B cell (primary cell): ENCODE measurements at regions of chr14 and their contacts with region 1.

Region 1: GRCh38 chr14:32202998-32203882 is at the start of gene RNU6-8:
- DNase-seq: peak; percentile 94
- ATAC-seq: peak; percentile 77
- H3K4me3 ChIP-seq: peak within 1 kb of the TSS; percentile 67 to 88 (median 87)
- H3K4me3 Mint-ChIP-seq: peak within 1 kb of the TSS; percentile 92
- H3K27ac ChIP-seq: peak within 1 kb of the TSS; percentile 99
- H3K27ac Mint-ChIP-seq: peak within 1 kb of the TSS; percentile 99
- H3K4me1 ChIP-seq: peaks cover 13 to 27% of the 10 kb centered on the region in 2 donors
- H3K4me1 Mint-ChIP-seq: peaks cover 48% of the 10 kb centered on the region
- H3K27me3 ChIP-seq: no peaks in the 10 kb centered on the region
- H3K27me3 Mint-ChIP-seq: no peaks in the 10 kb centered on the region
- CTCF ChIP-seq: no peak
- total RNA-seq, gene RNU6-8: not detected in 2 replicates

Region 2: DNA sequence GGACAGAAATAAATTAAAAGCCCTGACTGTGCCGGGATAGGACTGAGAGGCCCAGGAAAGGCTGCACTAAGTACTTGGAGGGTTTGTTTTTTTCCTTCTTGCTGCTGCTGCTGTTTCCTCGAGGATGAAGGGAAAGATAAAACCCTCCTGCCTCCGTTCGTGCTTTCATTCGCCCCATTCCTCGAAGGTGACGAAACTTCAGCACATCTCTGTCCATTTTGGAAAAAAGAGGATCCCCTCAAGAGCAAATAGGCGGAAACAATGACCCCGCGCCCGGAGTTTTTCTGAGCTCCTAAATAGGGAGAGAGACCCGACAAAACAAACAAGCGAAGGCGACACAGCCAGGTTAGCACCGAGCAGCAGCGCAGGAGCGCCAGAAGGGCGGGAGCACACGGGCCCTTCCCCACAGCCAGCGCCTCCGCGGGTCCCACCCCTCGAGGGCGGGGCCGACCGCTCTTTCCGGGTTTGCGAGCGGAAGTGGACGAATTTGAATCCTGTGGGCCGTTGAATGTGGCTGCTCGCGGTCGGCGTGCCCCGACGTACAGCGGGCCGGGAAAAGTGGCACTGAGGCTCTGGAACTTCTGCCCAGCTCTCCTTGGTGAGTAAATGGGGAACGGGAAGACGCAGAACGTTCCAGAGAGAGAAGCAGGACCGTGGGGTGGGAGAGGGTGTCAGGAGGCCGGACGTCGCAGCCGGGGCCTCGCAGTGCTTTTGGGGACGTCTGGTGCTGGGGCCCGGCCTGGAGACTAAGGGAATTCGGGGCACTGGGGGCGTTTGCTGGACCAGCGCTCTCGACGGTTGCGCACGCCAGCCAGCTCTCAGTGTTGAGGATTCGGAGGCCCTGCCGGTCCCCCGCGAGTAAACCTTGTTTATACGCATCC is 1644.3 kb before region 1 on chr14 and contains the start of gene G2E3:
- CTCF ChIA-PET with region 1: no interaction called
- POLR2A ChIA-PET with region 1: no interaction called
- intact Hi-C with region 1: loop called (anchors 2 kb)
- DNase-seq: peak; percentile 90
- ATAC-seq: peak; percentile 99
- H3K4me3 ChIP-seq: peak within 1 kb of the TSS; percentile 87 to 99 (median 95)
- H3K4me3 Mint-ChIP-seq: peak within 1 kb of the TSS; percentile 100
- H3K27ac ChIP-seq: peak within 1 kb of the TSS; percentile 77 to 89
- H3K27ac Mint-ChIP-seq: peak within 1 kb of the TSS; percentile 98
- H3K4me1 ChIP-seq: peaks cover 15 to 17% of the 10 kb centered on the region in 2 donors
- H3K4me1 Mint-ChIP-seq: peaks cover 32% of the 10 kb centered on the region
- H3K27me3 ChIP-seq: no peaks in the 10 kb centered on the region
- H3K27me3 Mint-ChIP-seq: no peaks in the 10 kb centered on the region
- CTCF ChIP-seq: no peak
- total RNA-seq, gene G2E3: 29.2 and 35.4 TPM in 2 replicates

Region 3: GRCh38 chr14:31207755-31208545 is 995.3 kb before region 1 on chr14 and contains the start of gene HECTD1:
- CTCF ChIA-PET with region 1: interaction called, 3 read pairs
- POLR2A ChIA-PET with region 1: no interaction called
- intact Hi-C with region 1: loop called (anchors 5 kb)
- DNase-seq: peak; percentile 95
- ATAC-seq: peak; percentile 83
- H3K4me3 ChIP-seq: peak within 1 kb of the TSS; percentile 75 to 90 (median 83)
- H3K4me3 Mint-ChIP-seq: peak within 1 kb of the TSS; percentile 99
- H3K27ac ChIP-seq: peak within 1 kb of the TSS; percentile 94 to 97
- H3K27ac Mint-ChIP-seq: peak within 1 kb of the TSS; percentile 99
- H3K4me1 ChIP-seq: peaks cover 21 to 27% of the 10 kb centered on the region in 2 donors
- H3K4me1 Mint-ChIP-seq: peaks cover 37% of the 10 kb centered on the region
- H3K27me3 ChIP-seq: no peaks in the 10 kb centered on the region
- H3K27me3 Mint-ChIP-seq: no peaks in the 10 kb centered on the region
- CTCF ChIP-seq: peak; percentile 97
- total RNA-seq, gene HECTD1: 184 and 199 TPM in 2 replicates

Region 4: DNA sequence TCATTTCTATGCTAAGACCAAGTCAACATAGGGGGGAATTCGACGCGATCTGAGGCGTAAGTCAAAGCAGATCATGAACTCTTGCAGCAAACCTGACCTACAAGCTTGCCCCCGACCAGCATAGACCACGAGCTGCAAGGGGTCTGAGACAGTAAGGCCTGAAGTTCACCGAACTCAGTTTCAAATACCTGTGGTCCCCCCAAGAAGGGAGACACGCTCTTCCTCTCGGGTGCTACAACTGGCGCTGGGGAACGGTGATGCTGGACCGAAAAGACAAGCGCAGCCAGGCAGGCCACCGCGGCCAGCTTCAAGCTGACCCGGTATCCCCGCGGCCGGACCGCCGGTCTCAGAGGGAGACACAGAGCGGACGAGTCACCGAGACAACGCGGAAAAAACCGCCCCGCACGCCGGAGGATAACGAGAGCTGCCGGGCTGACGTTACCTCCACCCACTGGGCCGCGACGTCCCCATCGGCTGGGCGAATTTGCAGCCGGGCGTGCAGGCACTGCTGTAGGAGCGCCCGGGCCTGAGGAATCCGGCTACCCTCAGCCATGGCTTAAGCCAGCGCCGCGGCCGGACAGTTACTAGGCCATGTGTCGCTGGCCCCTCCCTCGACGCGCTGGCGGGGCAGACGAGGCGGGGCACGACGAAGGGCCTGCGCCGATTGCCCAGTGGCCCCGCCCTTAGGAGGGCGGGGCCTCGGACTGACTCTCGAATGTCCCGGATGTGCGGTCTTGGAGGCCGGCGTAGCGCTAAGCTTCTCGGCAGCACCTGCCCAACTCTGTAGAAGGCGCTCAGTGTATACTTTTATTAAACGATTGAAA is 746.2 kb before region 1 on chr14 and contains the start of gene DTD2:
- CTCF ChIA-PET with region 1: no interaction called
- POLR2A ChIA-PET with region 1: no interaction called
- intact Hi-C with region 1: loop called (anchors 2 kb)
- DNase-seq: peak; percentile 95
- ATAC-seq: peak; percentile 99
- H3K4me3 ChIP-seq: peak within 1 kb of the TSS; percentile 63 to 87 (median 71)
- H3K4me3 Mint-ChIP-seq: peak within 1 kb of the TSS; percentile 98
- H3K27ac ChIP-seq: peak within 1 kb of the TSS; percentile 72 to 82
- H3K27ac Mint-ChIP-seq: peak within 1 kb of the TSS; percentile 93
- H3K4me1 ChIP-seq: peaks cover 8 to 13% of the 10 kb centered on the region in 2 donors
- H3K4me1 Mint-ChIP-seq: peaks cover 32% of the 10 kb centered on the region
- H3K27me3 ChIP-seq: no peaks in the 10 kb centered on the region
- H3K27me3 Mint-ChIP-seq: no peaks in the 10 kb centered on the region
- CTCF ChIP-seq: no peak
- total RNA-seq, gene DTD2: 12.5 and 14.1 TPM in 2 replicates

Region 5: GRCh38 chr14:32150392-32150791 is 52.8 kb before region 1 on chr14:
- CTCF ChIA-PET with region 1: no interaction called
- POLR2A ChIA-PET with region 1: no interaction called
- intact Hi-C with region 1: loop called (anchors 10 kb)
- DNase-seq: no peak
- ATAC-seq: no peak
- H3K4me3 ChIP-seq: no peak overlapping the region
- H3K4me3 Mint-ChIP-seq: no peak overlapping the region
- H3K27ac ChIP-seq: no peak overlapping the region
- H3K27ac Mint-ChIP-seq: no peak overlapping the region
- H3K4me1 ChIP-seq: no peaks in the 10 kb centered on the region
- H3K4me1 Mint-ChIP-seq: no peaks in the 10 kb centered on the region
- H3K27me3 ChIP-seq: no peaks in the 10 kb centered on the region
- H3K27me3 Mint-ChIP-seq: no peaks in the 10 kb centered on the region
- CTCF ChIP-seq: no peak

Region 6: DNA sequence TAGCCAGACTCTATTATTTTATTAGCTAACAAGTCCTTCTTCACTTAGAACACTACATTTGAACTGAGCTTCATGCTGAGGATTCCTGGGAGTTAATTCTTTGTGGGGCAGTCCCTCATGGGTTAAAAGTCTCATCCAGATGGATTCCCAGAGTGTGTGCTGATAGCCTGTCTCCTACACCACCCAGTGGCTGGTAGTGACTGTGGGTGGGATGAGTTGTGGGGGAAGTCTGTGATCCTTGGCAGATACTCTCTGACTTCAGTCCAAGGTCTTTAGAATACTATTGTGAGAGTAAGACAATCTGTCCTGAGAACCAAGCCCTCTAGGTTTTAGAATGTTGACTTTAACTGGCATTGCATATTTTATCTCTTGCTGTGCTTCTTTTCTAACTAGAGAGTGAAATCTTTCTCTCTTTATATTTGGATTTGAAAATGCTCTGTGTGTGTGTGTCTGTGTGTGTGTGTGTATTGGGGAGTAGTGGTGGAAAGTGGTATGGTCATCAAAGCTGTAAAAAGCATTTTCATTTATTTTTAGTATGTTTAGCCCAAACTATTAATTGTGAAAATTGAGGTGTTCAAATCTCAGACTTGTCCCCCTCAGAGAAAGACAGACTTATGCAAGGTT is 163.1 kb after region 1 on chr14:
- CTCF ChIA-PET with region 1: no interaction called
- POLR2A ChIA-PET with region 1: no interaction called
- intact Hi-C with region 1: no loop called
- DNase-seq: no peak
- ATAC-seq: no peak
- H3K4me3 ChIP-seq: no peak overlapping the region
- H3K4me3 Mint-ChIP-seq: no peak overlapping the region
- H3K27ac ChIP-seq: no peak overlapping the region
- H3K27ac Mint-ChIP-seq: no peak overlapping the region
- H3K4me1 ChIP-seq: no peaks in the 10 kb centered on the region
- H3K4me1 Mint-ChIP-seq: no peaks in the 10 kb centered on the region
- H3K27me3 ChIP-seq: no peaks in the 10 kb centered on the region
- H3K27me3 Mint-ChIP-seq: peaks cover 8% of the 10 kb centered on the region
- CTCF ChIP-seq: no peak